ENCODE measurements at regions of chr17 and their contacts with region 1.

Region 1: GRCh38 chr17:78865682-78866390 is 25.2 kb upstream of the USP36 start:
- DNase-seq: peak; percentile 87
- H3K4me3 ChIP-seq: no peak overlapping the region
- H3K27ac ChIP-seq: peak overlapping the region; percentile 31 to 60 (median 45)
- H3K4me1 ChIP-seq: peaks cover 3 to 27% (median 6%) of the 10 kb centered on the region in 4 donors
- H3K27me3 ChIP-seq: no peaks in the 10 kb centered on the region
- CTCF ChIP-seq: peak; percentile 87 to 92 (median 88)
- EP300 ChIP-seq: no peak
- POLR2A ChIP-seq: no peak

Region 2: GRCh38 chr17:78957128-78957527 is 91.3 kb after region 1 on chr17:
- in situ Hi-C with region 1: loop called in 1 of 4 experiments (anchors 5 kb)
- intact Hi-C with region 1: no loop called
- DNase-seq: no peak
- H3K4me3 ChIP-seq: no peak overlapping the region
- H3K27ac ChIP-seq: no peak overlapping the region
- H3K4me1 ChIP-seq: peaks cover 3 to 21% (median 8%) of the 10 kb centered on the region in 4 donors
- H3K27me3 ChIP-seq: no peaks in the 10 kb centered on the region
- CTCF ChIP-seq: no peak
- EP300 ChIP-seq: no peak
- POLR2A ChIP-seq: no peak

Region 3: DNA sequence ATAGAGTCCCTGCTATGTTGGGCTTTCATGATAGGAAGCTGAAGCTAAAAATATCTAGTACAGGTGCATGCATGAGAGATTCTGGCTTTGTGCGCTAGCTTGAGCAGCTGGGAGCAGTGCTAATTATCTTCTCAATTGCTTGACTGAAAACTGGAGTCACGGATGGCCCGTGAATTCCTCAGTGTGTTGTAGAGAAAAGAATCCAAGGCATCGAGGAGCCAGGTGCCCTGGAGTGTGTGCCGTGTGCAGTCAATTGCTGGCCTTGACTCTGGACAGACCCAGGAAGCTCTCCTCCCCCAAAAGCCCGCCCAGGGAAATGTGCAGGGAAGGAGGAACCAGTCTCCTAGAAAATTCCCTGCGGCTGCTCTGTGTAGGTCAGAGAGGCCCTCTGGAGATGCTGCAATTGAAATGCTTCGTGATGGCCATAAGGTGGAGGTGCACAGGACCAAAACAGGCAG is 99.7 kb after region 1 on chr17:
- in situ Hi-C with region 1: loop called in 3 of 4 experiments (anchors 5 to 10 kb)
- intact Hi-C with region 1: no loop called
- DNase-seq: no peak
- H3K4me3 ChIP-seq: no peak overlapping the region
- H3K27ac ChIP-seq: no peak overlapping the region
- H3K4me1 ChIP-seq: peaks cover 0 to 18% (median 9%) of the 10 kb centered on the region in 4 donors
- H3K27me3 ChIP-seq: no peaks in the 10 kb centered on the region
- CTCF ChIP-seq: no peak
- EP300 ChIP-seq: no peak
- POLR2A ChIP-seq: no peak

Region 4: DNA sequence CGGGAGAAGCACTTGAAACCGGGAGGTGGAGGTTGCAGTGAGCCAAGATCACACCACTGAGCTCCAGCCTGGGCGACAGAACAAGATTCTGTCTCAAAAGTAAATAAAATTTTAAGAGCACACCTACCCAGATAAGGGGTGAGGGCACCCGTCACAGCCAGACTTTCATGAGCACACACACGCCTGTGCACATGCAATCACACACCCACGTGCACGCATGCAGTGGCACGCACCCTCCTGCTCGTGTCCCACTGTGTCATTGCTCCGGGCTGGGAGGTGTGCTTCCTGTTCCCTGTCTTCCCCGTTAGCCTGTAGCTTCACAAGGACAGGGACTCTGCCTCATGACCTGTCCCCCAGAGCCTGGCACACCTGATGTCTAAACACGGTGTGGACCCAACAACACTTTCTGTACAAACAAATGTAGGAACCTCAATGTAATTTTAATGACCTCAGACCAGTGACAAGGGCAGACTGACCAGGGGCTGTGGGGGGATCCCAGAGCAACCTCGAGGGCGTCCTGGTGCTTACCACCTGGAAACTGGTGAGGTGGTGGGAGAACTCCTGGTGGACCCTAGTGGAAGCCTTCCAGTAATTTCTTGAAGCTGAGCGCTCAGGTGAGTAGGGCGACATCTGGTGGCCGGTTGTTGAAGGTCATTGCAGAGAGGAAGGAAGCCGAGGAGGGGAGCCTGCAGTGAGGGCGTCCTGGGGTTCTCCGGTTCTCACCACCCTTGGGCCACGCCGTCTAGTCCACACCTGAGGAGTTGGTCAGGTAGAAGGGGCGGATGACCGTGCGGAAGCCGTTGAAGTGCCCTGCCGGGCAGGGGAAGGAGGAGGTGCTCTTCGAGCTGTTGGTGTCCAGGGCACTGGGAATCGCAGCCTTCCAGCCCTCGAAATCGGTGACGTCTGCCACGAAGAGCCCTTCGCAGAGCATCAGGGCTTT is 105.3 kb after region 1 on chr17:
- in situ Hi-C with region 1: loop called in 3 of 4 experiments (anchors 5 to 10 kb)
- intact Hi-C with region 1: loop called (anchors 1 kb)
- DNase-seq: peak; percentile 86
- H3K4me3 ChIP-seq: no peak overlapping the region
- H3K27ac ChIP-seq: peak overlapping the region in 2 of 4 donors; percentile 6 to 18
- H3K4me1 ChIP-seq: peaks cover 16 to 23% (median 17%) of the 10 kb centered on the region in 4 donors
- H3K27me3 ChIP-seq: no peaks in the 10 kb centered on the region
- CTCF ChIP-seq: peak; percentile 89 to 98 (median 91)
- EP300 ChIP-seq: no peak
- POLR2A ChIP-seq: no peak

Region 5: GRCh38 chr17:79114458-79115301 is 248.8 kb after region 1 on chr17:
- in situ Hi-C with region 1: no loop called
- intact Hi-C with region 1: no loop called
- DNase-seq: peak; percentile 64
- H3K4me3 ChIP-seq: no peak overlapping the region
- H3K27ac ChIP-seq: peak overlapping the region in 1 of 4 donors; percentile 27
- H3K4me1 ChIP-seq: peaks cover 3 to 23% (median 19%) of the 10 kb centered on the region in 4 donors
- H3K27me3 ChIP-seq: peaks cover 29% of the 10 kb centered on the region
- CTCF ChIP-seq: no peak
- EP300 ChIP-seq: no peak
- POLR2A ChIP-seq: no peak